Posterior cingulate gyrus (tissue), 11 donors: ENCODE measurements at regions of chr7 and their contacts with region 1.

Region 1: GRCh38 chr7:130486114-130486958 is 5.5 kb upstream of the MEST start:
- DNase-seq: peak in 7 of 10 donors; percentile 37 to 92 (median 40)

Region 2: GRCh38 chr7:130277763-130278643 is 208.3 kb before region 1 on chr7:
- intact Hi-C with region 1: loop called (anchors 5 kb)
- DNase-seq: peak in 7 of 10 donors; percentile 52 to 93 (median 56)

Region 3: DNA sequence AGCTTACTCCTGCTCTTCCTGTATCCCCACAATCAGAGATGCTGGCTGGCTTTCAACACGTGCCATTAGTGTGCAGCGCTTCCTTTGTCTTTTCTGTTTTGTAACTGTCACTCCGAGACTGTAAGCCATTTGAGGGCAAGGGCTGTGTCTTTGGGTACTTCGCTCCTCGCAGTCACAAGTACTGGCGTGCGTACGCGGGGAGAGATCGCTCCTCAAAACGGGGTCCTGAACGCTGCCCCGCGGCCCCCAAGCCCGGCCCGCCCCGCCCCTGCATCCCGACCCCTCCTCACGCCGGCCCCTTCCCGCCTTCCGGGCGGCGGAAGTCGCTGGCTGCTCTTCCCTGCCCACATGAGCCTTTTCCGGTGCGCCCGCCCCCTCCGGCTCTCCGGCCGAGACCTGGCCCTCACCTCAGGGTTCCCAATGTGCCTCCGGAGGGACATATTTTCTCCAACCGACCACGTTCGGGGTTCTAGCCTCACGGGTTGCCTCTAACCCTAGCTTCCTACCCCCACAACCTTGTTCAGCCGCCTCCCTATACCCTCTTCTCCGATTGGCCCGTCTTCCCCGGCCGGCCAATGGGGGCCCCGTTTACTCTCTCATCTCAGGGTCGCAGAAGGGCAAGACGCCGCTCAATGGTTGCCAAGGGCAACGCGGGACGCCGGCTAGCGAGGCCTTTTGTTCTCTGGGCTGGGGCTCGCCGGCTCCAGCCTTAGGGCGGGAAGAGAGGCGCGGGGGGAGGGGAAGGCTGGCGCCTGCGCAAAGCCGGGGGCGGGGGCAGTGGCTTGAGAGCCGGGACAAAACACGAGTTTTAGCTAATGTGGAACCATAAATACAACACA is 45.6 kb before region 1 on chr7 and contains the start of gene CEP41:
- intact Hi-C with region 1: loop called (anchors 5 kb)
- DNase-seq: peak; percentile 96 to 100 (median 98)

Region 4: DNA sequence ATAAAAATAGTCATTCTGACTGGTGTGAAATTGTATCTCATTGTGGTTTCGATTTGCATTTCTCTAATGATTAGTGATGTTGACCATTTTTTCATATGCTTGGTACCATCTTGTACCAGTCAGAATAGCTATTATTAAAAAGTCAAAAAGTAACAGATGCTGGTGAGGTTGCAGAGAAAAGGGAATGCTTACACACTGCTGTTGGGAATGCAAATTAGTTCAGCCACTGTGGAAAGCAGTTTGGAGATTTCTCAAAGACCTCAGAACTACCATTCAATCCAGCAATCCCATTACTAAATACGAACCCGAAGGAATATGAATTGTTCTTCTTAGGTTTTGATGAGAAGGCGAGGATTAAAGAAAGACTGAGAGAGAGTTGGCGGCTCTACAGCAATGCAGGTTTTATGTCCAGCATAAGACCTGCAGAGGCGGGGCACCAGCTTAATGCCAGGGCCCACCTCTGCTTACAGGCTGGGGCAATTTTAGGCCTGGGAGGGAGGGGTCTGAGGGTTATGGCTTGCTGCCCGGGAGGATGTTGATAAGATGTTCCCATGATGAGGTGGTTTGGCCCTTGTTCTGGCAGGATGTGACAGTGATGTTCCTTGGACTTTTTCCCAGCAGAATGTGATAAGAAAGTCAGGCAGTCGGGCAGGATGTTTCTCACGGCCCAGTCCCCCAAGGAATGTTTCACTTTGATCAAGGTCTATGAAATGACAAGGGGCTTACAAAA is 80.0 kb after region 1 on chr7:
- intact Hi-C with region 1: no loop called
- DNase-seq: no peak